CD8-positive, alpha-beta T cell (primary cell): ENCODE measurements at regions of chr12 and their contacts with region 1.

Region 1: GRCh38 chr12:110600254-110600653 is 13.7 kb upstream of the TCTN1 start:
- DNase-seq: peak in 2 of 9 experiments; percentile 61 to 73
- ATAC-seq: peak; percentile 48
- H3K4me3 ChIP-seq: no peak overlapping the region
- H3K4me3 Mint-ChIP-seq: no peak overlapping the region
- H3K27ac ChIP-seq: no peak overlapping the region
- H3K27ac Mint-ChIP-seq: peak overlapping the region; percentile 34
- H3K4me1 ChIP-seq: no peaks in the 10 kb centered on the region
- H3K4me1 Mint-ChIP-seq: peaks cover 4% of the 10 kb centered on the region
- H3K27me3 ChIP-seq: no peaks in the 10 kb centered on the region
- H3K27me3 Mint-ChIP-seq: no peaks in the 10 kb centered on the region
- CTCF ChIP-seq: peak; percentile 56

Region 2: GRCh38 chr12:110355073-110355472 is 245.2 kb before region 1 on chr12:
- CTCF ChIA-PET with region 1: interaction called, 3 read pairs
- POLR2A ChIA-PET with region 1: no interaction called
- intact Hi-C with region 1: loop called in 1 of 2 experiments (anchors 2 kb)
- DNase-seq: peak in 6 of 9 experiments; percentile 8 to 56 (median 28)
- ATAC-seq: peak; percentile 65
- H3K4me3 ChIP-seq: no peak overlapping the region
- H3K4me3 Mint-ChIP-seq: no peak overlapping the region
- H3K27ac ChIP-seq: no peak overlapping the region
- H3K27ac Mint-ChIP-seq: no peak overlapping the region
- H3K4me1 ChIP-seq: peaks cover 12% of the 10 kb centered on the region
- H3K4me1 Mint-ChIP-seq: peaks cover 25% of the 10 kb centered on the region
- H3K27me3 ChIP-seq: no peaks in the 10 kb centered on the region
- H3K27me3 Mint-ChIP-seq: no peaks in the 10 kb centered on the region
- CTCF ChIP-seq: peak; percentile 36

Region 3: DNA sequence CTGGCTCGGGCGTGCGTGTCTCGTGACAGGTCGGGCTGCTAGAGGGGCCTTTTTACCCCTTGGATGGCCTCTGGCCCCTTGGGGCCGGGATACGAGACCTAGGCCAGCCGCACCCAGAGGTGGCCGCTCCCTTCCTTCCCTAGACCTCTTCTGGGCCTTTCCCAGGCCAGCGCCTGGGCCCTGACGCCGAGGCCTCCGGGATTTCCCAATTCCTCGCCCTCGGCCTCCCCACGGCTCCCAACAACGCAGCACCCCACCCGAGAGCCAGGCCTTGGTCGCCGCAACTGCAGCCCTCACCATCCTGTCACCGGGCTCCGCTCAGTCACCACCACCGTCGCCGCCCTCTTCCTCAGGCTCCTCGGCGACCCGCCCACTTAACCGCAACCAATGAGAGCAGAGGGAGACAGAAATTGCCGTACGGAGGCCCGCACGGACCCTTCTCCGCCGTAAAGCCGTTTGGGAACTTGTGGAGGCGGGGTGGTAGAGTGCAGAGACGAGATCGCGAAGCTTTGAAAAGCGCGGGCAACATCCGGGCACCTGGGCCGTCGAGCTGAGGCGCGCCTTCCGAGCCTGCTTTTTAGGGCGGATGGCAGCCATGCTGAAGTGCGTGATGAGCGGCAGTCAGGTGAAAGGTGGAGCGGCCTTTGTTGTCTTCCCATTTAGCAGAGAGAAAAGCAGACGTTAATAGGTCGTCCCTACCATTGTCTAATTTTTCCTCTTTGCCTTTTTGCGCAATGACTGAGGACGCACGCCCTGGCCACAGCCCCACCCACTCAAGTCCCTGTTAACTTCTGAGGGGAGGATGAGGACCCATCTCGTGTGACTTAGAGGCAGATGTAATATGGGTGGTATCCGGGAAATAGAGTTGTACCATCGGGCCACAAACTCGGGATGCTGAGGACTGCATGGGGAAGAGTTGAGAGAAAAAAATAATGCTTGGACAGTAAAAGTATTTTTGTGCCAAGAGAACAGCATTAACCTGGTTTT is 98.2 kb before region 1 on chr12 and contains the starts of genes RAD9B and VPS29:
- CTCF ChIA-PET with region 1: interaction called, 71 read pairs
- POLR2A ChIA-PET with region 1: interaction called, 5 read pairs
- intact Hi-C with region 1: no loop called
- DNase-seq: peak; percentile 98 to 100 (median 99)
- ATAC-seq: peak; percentile 92
- H3K4me3 ChIP-seq: peak within 1 kb of the TSS; percentile 73 to 79
- H3K4me3 Mint-ChIP-seq: peak within 1 kb of the TSS; percentile 97
- H3K27ac ChIP-seq: peak within 1 kb of the TSS; percentile 74 to 89
- H3K27ac Mint-ChIP-seq: peak within 1 kb of the TSS; percentile 97
- H3K4me1 ChIP-seq: peaks cover 17% of the 10 kb centered on the region
- H3K4me1 Mint-ChIP-seq: peaks cover 38% of the 10 kb centered on the region
- H3K27me3 ChIP-seq: no peaks in the 10 kb centered on the region
- H3K27me3 Mint-ChIP-seq: no peaks in the 10 kb centered on the region
- CTCF ChIP-seq: no peak
- total RNA-seq, gene RAD9B: 0.57 to 1.5 TPM
- total RNA-seq, gene VPS29: 49.6 to 53.5 TPM

Region 4: GRCh38 chr12:110531741-110532333 is 68.4 kb before region 1 on chr12:
- CTCF ChIA-PET with region 1: interaction called, 27 read pairs
- POLR2A ChIA-PET with region 1: no interaction called
- intact Hi-C with region 1: no loop called
- DNase-seq: no peak
- ATAC-seq: no peak
- H3K4me3 ChIP-seq: no peak overlapping the region
- H3K4me3 Mint-ChIP-seq: no peak overlapping the region
- H3K27ac ChIP-seq: no peak overlapping the region
- H3K27ac Mint-ChIP-seq: peak overlapping the region; percentile 32
- H3K4me1 ChIP-seq: no peaks in the 10 kb centered on the region
- H3K4me1 Mint-ChIP-seq: peaks cover 8% of the 10 kb centered on the region
- H3K27me3 ChIP-seq: no peaks in the 10 kb centered on the region
- H3K27me3 Mint-ChIP-seq: no peaks in the 10 kb centered on the region
- CTCF ChIP-seq: no peak

Region 5: DNA sequence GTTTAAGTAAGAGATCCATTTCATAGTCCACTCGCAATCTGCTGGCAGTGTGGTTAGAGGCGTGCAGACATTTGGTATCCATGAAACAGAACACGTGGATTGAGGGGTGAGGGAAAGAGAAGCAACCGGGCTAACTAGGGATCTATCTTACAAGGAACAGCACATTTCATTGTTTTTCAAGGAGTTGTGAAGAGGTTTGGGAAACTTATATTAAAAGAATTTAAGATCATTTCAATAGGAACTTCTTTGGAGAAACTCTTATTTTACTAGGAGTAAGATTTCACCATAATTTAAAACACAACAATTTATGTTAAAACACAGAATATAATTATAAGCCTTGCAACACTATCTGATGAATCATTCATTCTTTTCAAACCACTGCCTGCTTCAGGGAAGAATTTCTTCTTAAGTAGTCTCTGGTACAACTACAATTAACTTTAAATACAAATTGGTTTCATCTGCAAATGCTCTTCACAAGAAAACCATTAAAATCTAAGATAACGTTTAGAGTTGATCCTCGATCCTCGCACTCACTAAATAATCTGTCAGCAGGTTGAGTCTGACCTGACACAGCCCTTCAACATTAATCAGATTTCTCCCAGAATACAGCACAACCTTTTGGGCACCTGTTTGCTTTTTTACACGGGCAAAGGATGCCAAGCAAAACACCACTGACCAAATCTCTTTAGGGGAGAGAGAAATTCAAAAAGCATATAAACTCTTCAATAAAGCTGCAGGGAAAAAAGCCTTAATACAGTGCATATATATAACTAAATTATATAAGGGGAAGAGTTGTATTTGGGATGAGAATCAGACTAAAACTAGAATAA is 44.5 kb before region 1 on chr12:
- CTCF ChIA-PET with region 1: interaction called, 291 read pairs
- POLR2A ChIA-PET with region 1: interaction called, 6 read pairs
- intact Hi-C with region 1: loop called (anchors 1 kb)
- DNase-seq: no peak
- ATAC-seq: no peak
- H3K4me3 ChIP-seq: no peak overlapping the region
- H3K4me3 Mint-ChIP-seq: no peak overlapping the region
- H3K27ac ChIP-seq: no peak overlapping the region
- H3K27ac Mint-ChIP-seq: peak overlapping the region; percentile 24
- H3K4me1 ChIP-seq: peaks cover 24% of the 10 kb centered on the region
- H3K4me1 Mint-ChIP-seq: peaks cover 49% of the 10 kb centered on the region
- H3K27me3 ChIP-seq: no peaks in the 10 kb centered on the region
- H3K27me3 Mint-ChIP-seq: no peaks in the 10 kb centered on the region
- CTCF ChIP-seq: no peak

Region 6: GRCh38 chr12:110583137-110584059 is 16.9 kb before region 1 on chr12 and contains the start of gene PPTC7:
- CTCF ChIA-PET with region 1: interaction called, 110 read pairs
- POLR2A ChIA-PET with region 1: interaction called, 4 read pairs
- intact Hi-C with region 1: loop called (anchors 1 to 2 kb)
- DNase-seq: peak; percentile 94 to 98 (median 97)
- ATAC-seq: peak; percentile 94
- H3K4me3 ChIP-seq: peak within 1 kb of the TSS; percentile 77 to 94
- H3K4me3 Mint-ChIP-seq: peak within 1 kb of the TSS; percentile 88
- H3K27ac ChIP-seq: peak within 1 kb of the TSS; percentile 63 to 87
- H3K27ac Mint-ChIP-seq: peak within 1 kb of the TSS; percentile 86
- H3K4me1 ChIP-seq: peaks cover 60% of the 10 kb centered on the region
- H3K4me1 Mint-ChIP-seq: peaks cover 61% of the 10 kb centered on the region
- H3K27me3 ChIP-seq: no peaks in the 10 kb centered on the region
- H3K27me3 Mint-ChIP-seq: no peaks in the 10 kb centered on the region
- CTCF ChIP-seq: no peak
- total RNA-seq, gene PPTC7: 49.6 to 50.4 TPM

Region 7: GRCh38 chr12:110826592-110827200 is 226.4 kb after region 1 on chr12:
- CTCF ChIA-PET with region 1: interaction called, 15 read pairs
- POLR2A ChIA-PET with region 1: no interaction called
- intact Hi-C with region 1: loop called (anchors 5 kb)
- DNase-seq: peak; percentile 64 to 85 (median 78)
- ATAC-seq: peak; percentile 95
- H3K4me3 ChIP-seq: no peak overlapping the region
- H3K4me3 Mint-ChIP-seq: peak overlapping the region; percentile 65
- H3K27ac ChIP-seq: no peak overlapping the region
- H3K27ac Mint-ChIP-seq: no peak overlapping the region
- H3K4me1 ChIP-seq: no peaks in the 10 kb centered on the region
- H3K4me1 Mint-ChIP-seq: peaks cover 5% of the 10 kb centered on the region
- H3K27me3 ChIP-seq: no peaks in the 10 kb centered on the region
- H3K27me3 Mint-ChIP-seq: peaks cover 9% of the 10 kb centered on the region
- CTCF ChIP-seq: peak; percentile 80